ENCODE measurements at regions of chr18 and their contacts with region 1.

Region 1: GRCh38 chr18:79679111-79679872 is at the start of gene CTDP1:
- DNase-seq: peak; percentile 94 to 99 (median 99)
- ATAC-seq: peak; percentile 91
- H3K4me3 ChIP-seq: peak within 1 kb of the TSS; percentile 94
- H3K4me3 Mint-ChIP-seq: peak within 1 kb of the TSS; percentile 85 to 99 (median 98)
- H3K27ac ChIP-seq: peak within 1 kb of the TSS; percentile 96
- H3K27ac Mint-ChIP-seq: peak within 1 kb of the TSS; percentile 92 to 100 (median 99)
- H3K4me1 ChIP-seq: peaks cover 34 to 55% of the 10 kb centered on the region in 2 donors
- H3K4me1 Mint-ChIP-seq: peaks cover 33 to 68% (median 63%) of the 10 kb centered on the region in 7 donors
- H3K27me3 ChIP-seq: no peaks in the 10 kb centered on the region
- H3K27me3 Mint-ChIP-seq: peaks cover 0 to 3% (median 0%) of the 10 kb centered on the region in 5 donors
- total RNA-seq, gene CTDP1: 38.8 to 75.3 (median 41.2) TPM

Region 2: GRCh38 chr18:79139206-79139605 is 540.1 kb before region 1 on chr18:
- CTCF ChIA-PET with region 1: no interaction called
- POLR2A ChIA-PET with region 1: no interaction called
- intact Hi-C with region 1: no loop called
- DNase-seq: peak in 7 of 9 donors; percentile 17 to 44 (median 26)
- ATAC-seq: peak; percentile 92
- H3K4me3 ChIP-seq: no peak overlapping the region
- H3K4me3 Mint-ChIP-seq: no peak overlapping the region
- H3K27ac ChIP-seq: no peak overlapping the region
- H3K27ac Mint-ChIP-seq: peak overlapping the region in 5 of 9 donors; percentile 28 to 69 (median 43)
- H3K4me1 ChIP-seq: no peaks in the 10 kb centered on the region
- H3K4me1 Mint-ChIP-seq: peaks cover 4 to 23% (median 13%) of the 10 kb centered on the region in 7 donors
- H3K27me3 ChIP-seq: no peaks in the 10 kb centered on the region
- H3K27me3 Mint-ChIP-seq: no peaks in the 10 kb centered on the region

Region 3: DNA sequence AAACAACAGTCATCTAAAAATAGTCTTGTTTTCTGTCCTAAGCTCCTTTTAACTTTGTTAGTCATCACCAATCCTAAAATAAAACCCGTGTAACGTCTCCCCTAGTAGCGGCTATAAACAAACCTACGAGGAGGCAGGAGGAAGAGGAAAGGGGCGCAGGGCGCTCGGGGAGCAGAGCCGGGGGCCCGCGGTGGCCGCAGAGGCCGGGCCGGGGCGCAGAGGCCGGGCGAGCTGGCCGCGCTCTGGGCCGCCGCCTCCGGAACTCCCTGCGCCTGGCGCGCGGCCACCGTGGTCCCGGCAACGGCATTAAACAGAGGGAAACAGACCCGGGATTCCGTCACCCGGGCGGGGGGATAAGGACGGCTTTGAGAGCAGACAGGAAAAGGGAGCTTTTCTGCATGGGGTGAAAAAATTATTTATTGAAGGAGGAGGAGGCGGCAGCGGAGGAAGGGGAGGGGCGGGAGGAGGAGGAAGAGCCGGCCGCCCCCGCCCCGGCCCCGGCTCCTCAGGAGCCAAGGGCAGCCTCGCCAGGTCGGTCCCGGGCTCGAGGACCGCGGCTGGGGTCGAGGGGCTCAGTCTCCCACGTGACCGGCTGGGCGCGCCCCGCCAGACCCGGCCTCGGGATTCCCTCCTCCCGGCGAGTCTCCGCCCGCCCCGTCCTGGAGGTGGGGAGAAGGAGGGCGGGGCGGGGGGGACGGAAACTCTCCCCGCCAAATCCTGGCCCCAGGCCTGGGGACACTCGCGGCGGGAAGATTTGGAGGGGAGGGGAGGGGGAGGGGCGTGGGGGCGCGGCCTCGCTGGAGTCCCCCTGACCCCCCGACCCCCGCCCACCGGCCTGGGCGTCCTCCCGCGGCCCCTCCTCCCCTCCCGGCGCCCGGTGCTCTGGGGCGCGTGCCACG is 285.4 kb before region 1 on chr18:
- CTCF ChIA-PET with region 1: no interaction called
- POLR2A ChIA-PET with region 1: interaction called, 3 read pairs
- intact Hi-C with region 1: loop called (anchors 1 to 5 kb)
- DNase-seq: peak in 6 of 9 donors; percentile 47 to 67 (median 54)
- ATAC-seq: peak; percentile 45
- H3K4me3 ChIP-seq: peak overlapping the region; percentile 59
- H3K4me3 Mint-ChIP-seq: peak overlapping the region; percentile 81 to 94 (median 91)
- H3K27ac ChIP-seq: peak overlapping the region; percentile 63
- H3K27ac Mint-ChIP-seq: peak overlapping the region; percentile 67 to 91 (median 85)
- H3K4me1 ChIP-seq: peaks cover 14 to 20% of the 10 kb centered on the region in 2 donors
- H3K4me1 Mint-ChIP-seq: peaks cover 15 to 61% (median 48%) of the 10 kb centered on the region in 7 donors
- H3K27me3 ChIP-seq: peaks cover 0 to 6% of the 10 kb centered on the region in 2 donors
- H3K27me3 Mint-ChIP-seq: peaks cover 0 to 39% (median 0%) of the 10 kb centered on the region in 5 donors

Region 4: DNA sequence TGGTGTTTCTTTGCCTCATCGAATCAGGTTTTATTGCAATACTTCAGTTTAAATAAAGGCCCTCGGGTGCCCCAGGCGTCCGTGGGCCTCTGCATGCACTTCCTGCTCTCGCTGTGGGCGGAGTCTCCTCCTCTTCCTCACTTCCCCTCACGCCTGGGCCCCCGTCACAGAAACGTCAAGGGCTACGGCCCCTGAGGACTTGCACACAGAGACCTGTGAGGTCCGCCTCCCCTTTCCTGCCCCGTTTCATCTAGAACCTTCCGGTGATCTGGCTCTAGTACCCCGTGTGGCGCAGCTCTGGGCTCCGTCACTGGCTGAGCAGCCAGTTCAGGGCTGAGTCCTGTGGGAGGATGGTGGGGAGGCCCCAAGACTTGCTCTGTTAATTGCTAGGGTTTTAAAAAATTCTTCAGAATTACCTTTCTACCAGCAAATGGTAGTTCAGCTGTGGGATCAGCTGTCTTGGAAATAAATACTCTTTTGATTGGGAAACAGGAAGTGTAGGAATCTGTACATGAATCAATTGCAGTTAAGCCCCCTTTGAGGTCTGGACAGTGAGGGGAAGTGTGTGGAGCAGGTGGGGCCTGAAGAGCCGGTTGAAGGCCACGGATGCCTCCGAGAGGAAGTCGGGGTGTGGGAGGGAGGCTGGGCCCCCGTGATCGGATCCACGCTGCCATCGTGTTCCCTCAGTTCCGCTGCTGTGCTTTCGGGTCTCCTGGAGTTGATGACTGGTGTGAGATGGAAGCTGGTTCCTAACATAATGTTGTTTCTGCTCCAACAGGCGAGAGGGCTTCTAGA is 273.3 kb before region 1 on chr18:
- CTCF ChIA-PET with region 1: no interaction called
- POLR2A ChIA-PET with region 1: interaction called, 6 read pairs
- intact Hi-C with region 1: loop called in 1 of 2 experiments (anchors 1 kb)
- DNase-seq: peak; percentile 68 to 97 (median 92)
- ATAC-seq: peak; percentile 91
- H3K4me3 ChIP-seq: peak overlapping the region; percentile 45
- H3K4me3 Mint-ChIP-seq: peak overlapping the region; percentile 89 to 98 (median 92)
- H3K27ac ChIP-seq: peak overlapping the region; percentile 92
- H3K27ac Mint-ChIP-seq: peak overlapping the region; percentile 96 to 100 (median 99)
- H3K4me1 ChIP-seq: peaks cover 34 to 54% of the 10 kb centered on the region in 2 donors
- H3K4me1 Mint-ChIP-seq: peaks cover 42 to 70% (median 54%) of the 10 kb centered on the region in 7 donors
- H3K27me3 ChIP-seq: no peaks in the 10 kb centered on the region
- H3K27me3 Mint-ChIP-seq: no peaks in the 10 kb centered on the region

Region 5: DNA sequence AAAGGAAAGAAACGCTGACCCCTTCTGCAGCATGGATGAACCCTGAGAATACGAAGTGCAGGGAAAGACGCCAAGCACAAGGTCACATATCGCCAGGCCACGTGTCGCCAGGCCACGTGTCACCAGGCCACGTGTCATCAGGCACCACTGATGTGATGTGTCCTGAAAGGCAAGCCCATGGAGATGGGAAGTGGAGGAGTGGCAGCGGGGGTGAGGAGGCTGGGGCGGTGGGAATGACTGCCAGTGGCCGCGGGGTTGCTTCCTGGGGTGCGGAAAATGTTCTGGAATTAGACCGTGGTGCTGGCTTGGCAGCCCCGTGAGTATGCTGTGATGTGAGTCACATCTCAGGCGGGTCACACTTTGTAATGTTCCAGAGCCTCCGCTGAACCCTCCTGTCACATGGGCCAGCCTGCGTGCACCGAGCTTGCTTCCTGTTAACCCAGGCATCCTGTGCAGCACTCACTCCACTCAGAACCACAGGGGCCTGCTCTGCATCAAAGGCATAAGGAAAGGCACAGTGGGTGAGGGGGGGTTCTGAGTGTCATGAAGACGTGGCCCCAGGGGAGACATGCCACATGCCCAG is 233.2 kb after region 1 on chr18:
- CTCF ChIA-PET with region 1: no interaction called
- POLR2A ChIA-PET with region 1: no interaction called
- intact Hi-C with region 1: loop called in 1 of 2 experiments (anchors 1 kb)
- DNase-seq: peak in 8 of 9 donors; percentile 20 to 63 (median 44)
- ATAC-seq: peak; percentile 37
- H3K4me3 ChIP-seq: no peak overlapping the region
- H3K4me3 Mint-ChIP-seq: peak overlapping the region in 7 of 10 donors; percentile 9 to 83 (median 49)
- H3K27ac ChIP-seq: peak overlapping the region; percentile 49
- H3K27ac Mint-ChIP-seq: peak overlapping the region in 7 of 9 donors; percentile 88 to 94 (median 91)
- H3K4me1 ChIP-seq: peaks cover 0 to 20% of the 10 kb centered on the region in 2 donors
- H3K4me1 Mint-ChIP-seq: peaks cover 18 to 42% (median 27%) of the 10 kb centered on the region in 7 donors
- H3K27me3 ChIP-seq: no peaks in the 10 kb centered on the region
- H3K27me3 Mint-ChIP-seq: no peaks in the 10 kb centered on the region

Region 6: DNA sequence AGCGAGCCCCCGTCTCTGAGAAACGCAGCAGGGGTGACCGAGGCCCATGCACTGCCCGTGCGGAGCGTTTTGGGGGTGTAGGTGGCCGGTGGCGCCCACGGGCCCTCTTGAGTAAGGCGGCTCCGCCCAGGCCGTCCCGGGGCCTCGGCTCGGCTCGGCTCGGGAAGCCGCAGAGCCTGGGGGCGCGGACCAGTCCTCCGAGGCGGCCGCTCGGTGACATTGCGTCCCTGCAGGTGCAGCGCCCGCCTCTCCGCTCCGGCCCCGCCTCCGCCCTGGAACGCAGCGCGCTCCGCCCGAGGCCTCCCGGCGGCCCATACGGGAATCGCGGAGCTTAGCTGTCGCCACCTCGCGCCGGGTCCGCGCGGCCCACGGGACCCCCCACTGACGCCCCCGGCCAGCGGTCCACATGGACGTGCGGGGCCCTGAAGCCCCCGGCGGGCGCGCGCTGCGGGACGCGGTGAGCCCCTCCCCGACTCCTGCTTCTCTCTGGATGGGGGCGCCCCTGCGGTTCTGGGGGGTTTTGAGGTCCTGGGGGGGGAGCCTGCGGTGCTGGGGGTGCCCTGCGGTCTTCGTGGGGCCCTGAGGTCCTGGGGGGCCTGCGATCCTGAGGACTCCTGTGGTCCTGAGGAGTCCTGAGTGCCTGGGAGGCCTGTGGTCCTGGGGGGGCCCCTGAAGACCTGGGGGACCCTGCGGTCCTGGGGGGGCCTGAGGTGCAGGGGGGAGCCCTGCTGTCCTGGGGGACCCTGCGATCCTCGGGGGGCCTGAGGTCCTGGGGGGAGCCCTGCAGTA is 285.2 kb after region 1 on chr18 and contains the start of gene HSBP1L1:
- CTCF ChIA-PET with region 1: no interaction called
- POLR2A ChIA-PET with region 1: interaction called, 4 read pairs
- intact Hi-C with region 1: loop called in 1 of 2 experiments (anchors 1 kb)
- DNase-seq: peak; percentile 60 to 75 (median 69)
- ATAC-seq: peak; percentile 89
- H3K4me3 ChIP-seq: peak within 1 kb of the TSS; percentile 22
- H3K4me3 Mint-ChIP-seq: peak within 1 kb of the TSS; percentile 81 to 93 (median 90)
- H3K27ac ChIP-seq: peak within 1 kb of the TSS; percentile 89
- H3K27ac Mint-ChIP-seq: peak within 1 kb of the TSS; percentile 88 to 96 (median 94)
- H3K4me1 ChIP-seq: peaks cover 14 to 19% of the 10 kb centered on the region in 2 donors
- H3K4me1 Mint-ChIP-seq: peaks cover 9 to 47% (median 20%) of the 10 kb centered on the region in 7 donors
- H3K27me3 ChIP-seq: no peaks in the 10 kb centered on the region
- H3K27me3 Mint-ChIP-seq: no peaks in the 10 kb centered on the region
- total RNA-seq, gene HSBP1L1: 13.7 to 44.9 (median 41.7) TPM

Region 7: DNA sequence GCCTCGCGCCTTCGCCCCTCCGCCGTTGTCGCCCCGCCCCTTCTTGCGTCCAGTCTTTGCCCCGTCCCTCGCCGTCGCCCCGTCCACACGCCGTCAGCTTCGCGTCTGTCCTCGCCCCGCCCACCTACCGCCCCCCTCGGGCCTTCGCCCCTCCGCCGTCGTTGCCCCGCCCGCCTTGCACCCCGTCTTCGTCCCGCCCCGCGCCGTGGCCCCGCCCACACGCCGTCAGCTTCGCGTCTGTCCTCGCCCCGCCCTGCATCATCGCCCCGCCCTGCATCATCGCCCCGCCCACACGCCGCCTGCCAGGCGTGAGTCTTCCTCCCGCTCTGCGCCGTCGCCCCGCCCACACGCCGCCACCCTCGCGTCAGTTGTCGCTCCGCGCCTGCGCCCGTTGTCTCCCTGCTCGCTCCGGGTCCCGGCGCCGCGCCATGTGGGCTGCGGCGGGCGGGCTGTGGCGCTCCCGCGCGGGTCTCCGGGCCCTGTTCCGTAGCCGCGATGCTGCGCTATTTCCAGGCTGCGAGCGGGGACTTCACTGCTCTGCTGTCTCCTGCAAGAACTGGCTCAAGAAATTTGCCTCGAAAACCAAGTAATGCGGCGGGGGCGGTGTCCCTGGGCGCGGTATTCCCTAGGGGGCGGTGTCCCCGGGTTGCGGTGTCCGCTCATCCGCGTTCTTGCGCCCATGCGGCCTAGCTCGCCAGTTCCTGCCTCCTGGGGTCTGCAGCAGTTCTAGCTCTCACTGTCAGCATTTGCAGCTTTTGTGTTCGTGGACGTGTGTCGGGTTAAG is 355.0 kb after region 1 on chr18 and contains the start of gene RBFA:
- CTCF ChIA-PET with region 1: no interaction called
- POLR2A ChIA-PET with region 1: interaction called, 6 read pairs
- intact Hi-C with region 1: loop called (anchors 1 kb)
- DNase-seq: peak; percentile 95 to 100 (median 98)
- ATAC-seq: peak; percentile 88
- H3K4me3 ChIP-seq: peak within 1 kb of the TSS; percentile 83
- H3K4me3 Mint-ChIP-seq: peak within 1 kb of the TSS; percentile 84 to 95 (median 91)
- H3K27ac ChIP-seq: peak within 1 kb of the TSS; percentile 87
- H3K27ac Mint-ChIP-seq: peak within 1 kb of the TSS; percentile 86 to 99 (median 96)
- H3K4me1 ChIP-seq: peaks cover 8 to 14% of the 10 kb centered on the region in 2 donors
- H3K4me1 Mint-ChIP-seq: peaks cover 22 to 36% (median 29%) of the 10 kb centered on the region in 7 donors
- H3K27me3 ChIP-seq: no peaks in the 10 kb centered on the region
- H3K27me3 Mint-ChIP-seq: no peaks in the 10 kb centered on the region
- total RNA-seq, gene RBFA: 17.6 to 23.5 (median 21.7) TPM

Region 8: DNA sequence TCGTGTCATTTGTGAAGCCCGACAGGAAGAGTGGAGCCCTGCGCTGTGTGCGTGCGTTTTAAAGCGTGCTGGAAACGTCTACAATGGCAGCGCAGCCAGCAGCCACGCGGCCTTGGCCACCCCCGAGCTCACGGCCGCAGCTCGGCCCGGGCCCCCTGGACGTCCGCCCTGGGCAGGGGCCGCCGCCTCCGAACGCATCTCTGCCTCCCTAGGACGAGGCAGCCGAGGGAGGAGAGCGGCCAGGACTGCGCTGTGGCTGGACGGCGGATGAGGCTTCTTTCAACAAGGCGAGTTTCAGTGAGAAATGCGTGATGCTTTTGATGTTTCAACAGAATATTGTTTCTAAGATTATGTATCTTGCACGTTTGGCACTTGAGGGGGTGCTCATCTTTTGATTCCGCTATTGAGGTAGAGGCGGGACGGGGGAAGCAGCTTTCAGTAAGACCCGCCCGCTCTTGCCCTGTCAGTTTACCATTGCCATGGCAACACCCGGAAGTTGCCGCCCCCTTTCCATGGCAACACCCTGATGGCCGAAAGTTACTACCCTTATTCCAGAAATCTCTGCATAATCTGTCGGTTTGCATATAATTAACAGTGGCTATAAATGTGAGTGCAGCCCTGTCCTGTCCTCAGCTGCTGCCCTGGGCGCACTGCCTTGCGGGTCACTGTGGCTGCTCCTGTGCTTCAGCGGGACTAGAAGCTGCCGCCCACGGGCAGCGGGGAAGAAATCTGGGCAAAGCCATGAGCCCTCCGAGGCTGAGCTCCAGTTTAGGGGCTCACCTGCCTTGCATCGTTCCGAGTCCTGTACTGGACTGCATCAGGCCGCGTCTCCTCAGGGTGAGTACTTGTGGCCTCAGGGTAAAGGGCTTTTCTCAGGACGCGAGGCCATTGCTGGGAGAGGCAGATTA is 468.4 kb after region 1 on chr18:
- CTCF ChIA-PET with region 1: no interaction called
- POLR2A ChIA-PET with region 1: no interaction called
- intact Hi-C with region 1: loop called in 1 of 2 experiments (anchors 5 kb)
- DNase-seq: peak; percentile 41 to 79 (median 62)
- ATAC-seq: peak; percentile 89
- H3K4me3 ChIP-seq: peak overlapping the region; percentile 55
- H3K4me3 Mint-ChIP-seq: peak overlapping the region; percentile 78 to 91 (median 86)
- H3K27ac ChIP-seq: no peak overlapping the region
- H3K27ac Mint-ChIP-seq: peak overlapping the region in 7 of 9 donors; percentile 18 to 78 (median 55)
- H3K4me1 ChIP-seq: peaks cover 7 to 9% of the 10 kb centered on the region in 2 donors
- H3K4me1 Mint-ChIP-seq: peaks cover 0 to 26% (median 17%) of the 10 kb centered on the region in 7 donors
- H3K27me3 ChIP-seq: peaks cover 0 to 2% of the 10 kb centered on the region in 2 donors
- H3K27me3 Mint-ChIP-seq: peaks cover 0 to 27% (median 10%) of the 10 kb centered on the region in 5 donors